HEK293 (cell line): ENCODE measurements at regions of chr18 and their contacts with region 1.

Region 1: GRCh38 chr18:59070181-59070912 is 69.3 kb upstream of the SEC11C start:
- H3K4me3 ChIP-seq: no peak overlapping the region
- H3K27ac ChIP-seq: no peak overlapping the region
- H3K4me1 ChIP-seq: peaks cover 9% of the 10 kb centered on the region
- CTCF ChIP-seq: peak; percentile 91

Region 2: GRCh38 chr18:59056706-59057492 is 13.4 kb before region 1 on chr18:
- CTCF ChIA-PET with region 1: interaction called, 14 read pairs
- POLR2A ChIA-PET with region 1: no interaction called
- H3K4me3 ChIP-seq: no peak overlapping the region
- H3K27ac ChIP-seq: 0 out of 2 replicates have a peak overlapping the region, but pooled peaks have one; percentile 11
- H3K4me1 ChIP-seq: peaks cover 23% of the 10 kb centered on the region
- CTCF ChIP-seq: peak; percentile 79

Region 3: DNA sequence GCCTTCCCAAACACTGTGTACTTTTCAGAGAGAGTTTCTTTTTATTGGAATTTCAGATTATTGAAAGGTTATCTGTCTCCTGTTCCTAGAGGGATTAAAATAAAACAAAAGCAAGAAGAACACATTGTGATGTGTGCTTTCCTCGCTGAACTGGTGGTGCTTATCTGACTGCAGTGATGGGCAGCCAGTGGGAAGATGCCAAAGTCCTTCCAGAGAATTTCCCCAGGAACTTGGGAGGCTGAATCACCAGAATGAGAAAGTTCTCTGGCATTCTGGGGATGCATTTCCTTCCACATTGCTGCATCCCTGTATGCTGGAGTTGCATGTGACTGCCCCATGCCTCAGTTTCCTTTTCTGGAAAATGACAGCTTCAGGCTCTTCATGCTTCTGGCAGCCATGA is 15.4 kb after region 1 on chr18:
- CTCF ChIA-PET with region 1: interaction called, 44 read pairs
- POLR2A ChIA-PET with region 1: no interaction called
- H3K4me3 ChIP-seq: no peak overlapping the region
- H3K27ac ChIP-seq: no peak overlapping the region
- H3K4me1 ChIP-seq: peaks cover 2% of the 10 kb centered on the region; the same call in 1 of the 2 replicates
- CTCF ChIP-seq: no peak

Region 4: DNA sequence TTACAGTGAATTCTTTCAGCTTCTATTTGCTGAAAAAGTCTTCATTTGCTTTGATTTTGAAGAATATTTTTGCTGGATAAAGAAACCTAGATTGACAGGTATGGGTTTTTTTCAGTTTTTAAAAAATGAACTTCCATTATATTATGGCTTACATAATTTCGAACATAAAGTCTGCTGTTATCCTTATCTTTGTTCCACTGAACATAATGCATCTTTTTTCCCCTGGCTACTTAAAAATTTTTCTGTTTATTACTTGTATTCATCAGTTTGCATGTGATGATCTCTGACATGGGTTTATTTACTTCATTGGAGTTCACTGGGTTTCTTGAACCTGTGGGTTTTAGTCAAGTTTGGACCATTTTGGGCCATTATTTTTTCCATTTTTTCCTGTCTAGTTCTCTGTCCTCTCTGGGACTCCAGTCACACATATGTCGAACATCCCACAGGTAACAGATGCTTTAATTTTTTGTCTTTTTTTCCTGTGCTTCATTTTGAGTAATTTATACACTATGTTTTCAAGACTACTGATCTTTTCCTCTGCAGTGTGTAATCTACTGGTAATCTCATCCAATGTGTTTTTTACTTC is 102.4 kb after region 1 on chr18:
- CTCF ChIA-PET with region 1: no interaction called
- POLR2A ChIA-PET with region 1: no interaction called
- H3K4me3 ChIP-seq: no peak overlapping the region
- H3K27ac ChIP-seq: no peak overlapping the region
- H3K4me1 ChIP-seq: no peaks in the 10 kb centered on the region
- CTCF ChIP-seq: no peak